ENCODE measurements at regions of chr10 and their contacts with region 1.

Region 1: GRCh38 chr10:43138021-43138756 is at the start of gene CSGALNACT2:
- DNase-seq: peak; percentile 78 to 95 (median 88)
- ATAC-seq: peak; percentile 65
- H3K4me3 ChIP-seq: peak within 1 kb of the TSS; percentile 70 to 87
- H3K4me3 Mint-ChIP-seq: peak within 1 kb of the TSS; percentile 98
- H3K27ac ChIP-seq: peak within 1 kb of the TSS; percentile 89 to 91
- H3K27ac Mint-ChIP-seq: peak within 1 kb of the TSS; percentile 99
- H3K4me1 ChIP-seq: peaks cover 36% of the 10 kb centered on the region
- H3K4me1 Mint-ChIP-seq: peaks cover 49% of the 10 kb centered on the region
- H3K27me3 ChIP-seq: no peaks in the 10 kb centered on the region
- H3K27me3 Mint-ChIP-seq: no peaks in the 10 kb centered on the region
- CTCF ChIP-seq: no peak
- total RNA-seq, gene CSGALNACT2: 66.7 to 66.9 TPM

Region 2: GRCh38 chr10:42638055-42638820 is 500.0 kb before region 1 on chr10 and contains the start of gene ZNF33B:
- CTCF ChIA-PET with region 1: no interaction called
- POLR2A ChIA-PET with region 1: no interaction called
- intact Hi-C with region 1: loop called (anchors 1 to 5 kb)
- DNase-seq: peak; percentile 84 to 97 (median 93)
- ATAC-seq: peak; percentile 92
- H3K4me3 ChIP-seq: peak within 1 kb of the TSS; percentile 82 to 88
- H3K4me3 Mint-ChIP-seq: peak within 1 kb of the TSS; percentile 98
- H3K27ac ChIP-seq: peak within 1 kb of the TSS; percentile 91 to 93
- H3K27ac Mint-ChIP-seq: peak within 1 kb of the TSS; percentile 98
- H3K4me1 ChIP-seq: peaks cover 14% of the 10 kb centered on the region
- H3K4me1 Mint-ChIP-seq: peaks cover 44% of the 10 kb centered on the region
- H3K27me3 ChIP-seq: no peaks in the 10 kb centered on the region
- H3K27me3 Mint-ChIP-seq: no peaks in the 10 kb centered on the region
- CTCF ChIP-seq: no peak
- total RNA-seq, gene ZNF33B: 16.4 to 17.0 TPM

Region 3: DNA sequence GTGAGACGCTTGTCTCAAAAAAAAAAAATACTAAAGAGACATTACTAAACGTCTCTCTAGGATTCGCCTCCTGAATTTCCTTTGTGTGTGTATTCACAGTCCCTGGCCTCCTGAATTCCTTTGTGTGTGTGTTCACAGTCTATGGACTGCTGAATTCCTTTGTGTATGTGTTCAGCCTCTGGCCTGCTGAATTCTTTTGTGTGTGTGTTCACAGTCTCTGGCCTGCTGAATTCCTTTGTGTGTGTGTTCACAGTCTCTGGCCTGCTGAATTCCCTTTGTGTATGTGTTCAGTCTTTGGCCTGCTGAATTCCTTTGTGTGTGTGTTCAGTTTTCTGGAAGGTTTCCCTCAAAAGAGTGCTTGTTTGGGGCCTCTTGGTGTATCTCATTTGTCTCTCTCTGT is 347.4 kb before region 1 on chr10:
- CTCF ChIA-PET with region 1: no interaction called
- POLR2A ChIA-PET with region 1: no interaction called
- intact Hi-C with region 1: no loop called
- DNase-seq: no peak
- ATAC-seq: no peak
- H3K4me3 ChIP-seq: no peak overlapping the region
- H3K4me3 Mint-ChIP-seq: no peak overlapping the region
- H3K27ac ChIP-seq: no peak overlapping the region
- H3K27ac Mint-ChIP-seq: no peak overlapping the region
- H3K4me1 ChIP-seq: no peaks in the 10 kb centered on the region
- H3K4me1 Mint-ChIP-seq: peaks cover 8% of the 10 kb centered on the region
- H3K27me3 ChIP-seq: no peaks in the 10 kb centered on the region
- H3K27me3 Mint-ChIP-seq: no peaks in the 10 kb centered on the region
- CTCF ChIP-seq: no peak

Region 4: DNA sequence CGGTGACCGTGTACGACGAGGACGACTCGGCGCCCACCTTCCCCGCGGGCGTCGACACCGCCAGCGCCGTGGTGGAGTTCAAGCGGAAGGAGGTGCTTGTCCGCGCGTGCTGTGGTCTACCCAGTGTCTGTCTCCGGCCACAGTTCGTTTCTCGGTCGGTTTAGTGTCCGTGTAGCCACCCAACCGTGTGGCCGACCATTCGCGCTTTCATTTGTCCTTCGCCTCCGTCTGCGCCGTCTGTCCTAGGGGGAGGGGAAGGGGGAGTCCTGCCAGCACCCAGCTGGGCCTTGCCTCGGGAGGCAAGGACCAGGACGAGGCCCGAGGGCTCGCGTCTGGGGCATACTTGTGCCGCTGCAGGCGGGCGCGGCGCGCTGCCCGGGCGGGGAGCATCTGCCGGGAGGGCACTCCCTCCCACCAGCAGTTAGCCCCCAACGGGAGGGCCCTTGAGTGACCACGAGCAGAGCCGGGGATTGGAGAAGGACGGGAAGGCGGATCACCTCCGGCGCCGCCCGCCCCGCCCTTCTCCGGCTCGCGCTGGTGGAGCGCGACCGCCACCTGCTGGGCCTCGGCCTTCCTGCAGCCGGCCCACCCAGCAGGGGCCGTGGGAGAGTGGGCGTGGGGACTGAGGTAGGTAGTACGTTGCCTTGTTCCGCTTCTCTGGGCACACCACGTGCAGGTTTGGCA is 32.9 kb before region 1 on chr10:
- CTCF ChIA-PET with region 1: no interaction called
- POLR2A ChIA-PET with region 1: no interaction called
- intact Hi-C with region 1: loop called in 1 of 2 experiments (anchors 1 kb)
- DNase-seq: peak; percentile 54 to 87 (median 71)
- ATAC-seq: peak; percentile 96
- H3K4me3 ChIP-seq: peak overlapping the region; percentile 56 to 72
- H3K4me3 Mint-ChIP-seq: peak overlapping the region; percentile 80
- H3K27ac ChIP-seq: no peak overlapping the region
- H3K27ac Mint-ChIP-seq: no peak overlapping the region
- H3K4me1 ChIP-seq: peaks cover 13% of the 10 kb centered on the region
- H3K4me1 Mint-ChIP-seq: peaks cover 8% of the 10 kb centered on the region
- H3K27me3 ChIP-seq: peaks cover 0 to 10% of the 10 kb centered on the region in 2 experiments
- H3K27me3 Mint-ChIP-seq: peaks cover 17% of the 10 kb centered on the region
- CTCF ChIP-seq: peak; percentile 98

Region 5: GRCh38 chr10:43204943-43205671 is 66.9 kb after region 1 on chr10:
- CTCF ChIA-PET with region 1: interaction called, 14 read pairs
- POLR2A ChIA-PET with region 1: interaction called, 10 read pairs
- intact Hi-C with region 1: loop called (anchors 1 to 5 kb)
- DNase-seq: peak in 8 of 9 experiments; percentile 33 to 77 (median 58)
- ATAC-seq: peak; percentile 55
- H3K4me3 ChIP-seq: no peak overlapping the region
- H3K4me3 Mint-ChIP-seq: no peak overlapping the region
- H3K27ac ChIP-seq: peak overlapping the region in 1 of 2 experiments; percentile 30
- H3K27ac Mint-ChIP-seq: no peak overlapping the region
- H3K4me1 ChIP-seq: peaks cover 3% of the 10 kb centered on the region
- H3K4me1 Mint-ChIP-seq: peaks cover 6% of the 10 kb centered on the region
- H3K27me3 ChIP-seq: no peaks in the 10 kb centered on the region
- H3K27me3 Mint-ChIP-seq: no peaks in the 10 kb centered on the region
- CTCF ChIP-seq: peak; percentile 70

Region 6: GRCh38 chr10:43263551-43264343 is 125.6 kb after region 1 on chr10:
- CTCF ChIA-PET with region 1: no interaction called
- POLR2A ChIA-PET with region 1: no interaction called
- intact Hi-C with region 1: no loop called
- DNase-seq: no peak
- ATAC-seq: no peak
- H3K4me3 ChIP-seq: no peak overlapping the region
- H3K4me3 Mint-ChIP-seq: no peak overlapping the region
- H3K27ac ChIP-seq: no peak overlapping the region
- H3K27ac Mint-ChIP-seq: no peak overlapping the region
- H3K4me1 ChIP-seq: peaks cover 6% of the 10 kb centered on the region
- H3K4me1 Mint-ChIP-seq: peaks cover 6% of the 10 kb centered on the region
- H3K27me3 ChIP-seq: peaks cover 14 to 21% of the 10 kb centered on the region in 2 experiments
- H3K27me3 Mint-ChIP-seq: peaks cover 38% of the 10 kb centered on the region
- CTCF ChIP-seq: no peak

Region 7: DNA sequence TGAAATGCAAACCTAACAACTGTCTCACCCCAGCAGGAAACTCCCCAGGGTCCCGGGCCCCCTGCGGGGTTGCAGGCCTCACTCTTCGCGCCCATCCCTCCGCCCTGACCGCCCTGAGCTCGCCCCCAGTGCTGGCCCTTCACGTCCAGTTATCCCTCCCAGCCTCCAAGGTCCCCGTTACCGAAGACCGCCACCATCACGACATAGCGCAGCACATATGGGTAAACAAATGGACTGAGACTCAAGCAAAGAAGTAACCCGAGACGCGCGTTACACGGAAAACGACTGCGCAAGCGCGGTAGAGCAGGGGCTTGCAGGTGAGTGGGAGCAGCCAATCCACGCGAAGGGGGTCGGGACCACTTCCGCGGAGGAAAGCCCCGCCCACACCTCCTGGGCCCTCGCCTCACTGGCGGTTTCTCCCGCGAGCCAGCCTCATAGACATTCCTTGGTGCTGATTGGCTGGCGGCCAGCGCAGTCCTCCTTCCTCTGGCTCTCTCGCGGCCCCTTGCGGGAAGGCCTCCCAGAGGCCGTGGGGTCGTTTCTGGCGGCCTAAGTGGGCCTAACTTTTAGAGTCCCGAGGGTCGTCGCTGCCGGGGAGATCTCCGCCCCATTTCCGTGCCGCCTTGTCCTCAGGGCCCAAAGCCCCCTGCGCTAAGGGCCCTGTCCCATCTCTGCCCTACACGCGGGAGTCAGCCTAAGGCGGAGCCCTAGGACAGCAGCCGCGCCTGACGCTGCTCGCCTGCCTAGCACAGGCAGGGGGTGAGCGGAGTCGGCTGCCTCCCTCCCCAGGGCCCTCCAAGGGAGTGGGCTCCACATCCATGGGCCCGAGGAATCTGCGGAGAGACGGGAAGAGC is 224.0 kb after region 1 on chr10:
- CTCF ChIA-PET with region 1: no interaction called
- POLR2A ChIA-PET with region 1: interaction called, 4 read pairs
- intact Hi-C with region 1: loop called in 1 of 2 experiments (anchors 1 kb)
- DNase-seq: peak; percentile 94 to 99 (median 97)
- ATAC-seq: peak; percentile 98
- H3K4me3 ChIP-seq: peak overlapping the region; percentile 80
- H3K4me3 Mint-ChIP-seq: peak overlapping the region; percentile 93
- H3K27ac ChIP-seq: peak overlapping the region; percentile 69 to 93
- H3K27ac Mint-ChIP-seq: peak overlapping the region; percentile 98
- H3K4me1 ChIP-seq: peaks cover 15% of the 10 kb centered on the region
- H3K4me1 Mint-ChIP-seq: peaks cover 26% of the 10 kb centered on the region
- H3K27me3 ChIP-seq: no peaks in the 10 kb centered on the region
- H3K27me3 Mint-ChIP-seq: no peaks in the 10 kb centered on the region
- CTCF ChIP-seq: peak; percentile 24

Region 8: GRCh38 chr10:43436400-43437140 is 298.4 kb after region 1 on chr10 and contains the start of gene ZNF487:
- CTCF ChIA-PET with region 1: no interaction called
- POLR2A ChIA-PET with region 1: no interaction called
- intact Hi-C with region 1: loop called in 1 of 2 experiments (anchors 1 kb)
- DNase-seq: peak; percentile 80 to 94 (median 87)
- ATAC-seq: peak; percentile 86
- H3K4me3 ChIP-seq: peak within 1 kb of the TSS; percentile 98 to 99
- H3K4me3 Mint-ChIP-seq: peak within 1 kb of the TSS; percentile 94
- H3K27ac ChIP-seq: peak within 1 kb of the TSS; percentile 98 to 100
- H3K27ac Mint-ChIP-seq: peak within 1 kb of the TSS; percentile 97
- H3K4me1 ChIP-seq: peaks cover 18% of the 10 kb centered on the region
- H3K4me1 Mint-ChIP-seq: peaks cover 26% of the 10 kb centered on the region
- H3K27me3 ChIP-seq: no peaks in the 10 kb centered on the region
- H3K27me3 Mint-ChIP-seq: no peaks in the 10 kb centered on the region
- CTCF ChIP-seq: no peak
- total RNA-seq, gene ZNF487: 7.3 to 8.9 TPM

Region 9: GRCh38 chr10:43739161-43739560 is 601.0 kb after region 1 on chr10:
- CTCF ChIA-PET with region 1: no interaction called
- POLR2A ChIA-PET with region 1: no interaction called
- intact Hi-C with region 1: no loop called
- DNase-seq: no peak
- ATAC-seq: no peak
- H3K4me3 ChIP-seq: no peak overlapping the region
- H3K4me3 Mint-ChIP-seq: no peak overlapping the region
- H3K27ac ChIP-seq: no peak overlapping the region
- H3K27ac Mint-ChIP-seq: no peak overlapping the region
- H3K4me1 ChIP-seq: no peaks in the 10 kb centered on the region
- H3K4me1 Mint-ChIP-seq: no peaks in the 10 kb centered on the region
- H3K27me3 ChIP-seq: no peaks in the 10 kb centered on the region
- H3K27me3 Mint-ChIP-seq: no peaks in the 10 kb centered on the region
- CTCF ChIP-seq: no peak

Region 10: DNA sequence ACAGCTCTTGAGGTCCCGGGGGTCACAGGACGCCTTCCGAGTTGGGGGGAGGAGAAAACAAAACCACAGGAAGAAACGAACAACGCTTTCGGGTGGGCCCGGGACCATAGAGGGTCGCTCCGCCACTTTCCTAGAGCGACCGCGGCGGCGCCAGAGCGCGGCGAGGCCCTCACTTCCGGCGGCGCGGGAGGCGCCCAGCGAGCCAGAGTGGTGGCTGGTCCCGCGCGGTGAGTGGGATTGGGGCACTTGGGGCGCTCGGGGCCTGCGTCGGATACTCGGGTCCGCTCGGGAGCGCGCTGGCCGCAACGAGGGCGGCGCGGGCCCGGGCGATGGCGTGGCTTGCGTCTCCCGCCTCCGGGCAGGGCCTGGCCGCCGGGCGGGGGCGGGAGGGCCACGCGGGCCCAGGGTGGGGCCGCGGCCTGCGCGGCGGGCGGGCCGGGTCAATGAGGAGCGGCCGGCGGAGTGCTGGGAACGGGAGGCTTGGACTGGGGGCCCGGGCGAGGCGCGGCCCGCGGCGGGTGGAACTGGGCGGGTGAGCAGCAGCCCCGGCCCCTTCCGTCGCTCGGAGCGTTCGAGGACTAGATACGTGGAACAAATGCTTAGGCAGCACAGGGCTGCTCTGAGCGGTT is 1862.7 kb after region 1 on chr10 and contains the start of gene ZNF22:
- CTCF ChIA-PET with region 1: no interaction called
- POLR2A ChIA-PET with region 1: interaction called, 3 read pairs
- intact Hi-C with region 1: loop called in 1 of 2 experiments (anchors 5 kb)
- DNase-seq: peak; percentile 50 to 89 (median 76)
- ATAC-seq: peak; percentile 79
- H3K4me3 ChIP-seq: peak within 1 kb of the TSS; percentile 60 to 65
- H3K4me3 Mint-ChIP-seq: peak within 1 kb of the TSS; percentile 89
- H3K27ac ChIP-seq: peak within 1 kb of the TSS; percentile 65 to 78
- H3K27ac Mint-ChIP-seq: peak within 1 kb of the TSS; percentile 98
- H3K4me1 ChIP-seq: peaks cover 32% of the 10 kb centered on the region
- H3K4me1 Mint-ChIP-seq: peaks cover 45% of the 10 kb centered on the region
- H3K27me3 ChIP-seq: no peaks in the 10 kb centered on the region
- H3K27me3 Mint-ChIP-seq: no peaks in the 10 kb centered on the region
- CTCF ChIP-seq: no peak
- total RNA-seq, gene ZNF22: 26.5 to 29.6 TPM

Measured in CD8-positive, alpha-beta T cell (primary cell).